K562 (cell line): ENCODE measurements at regions of chrX and their contacts with region 1.

Region 1: GRCh38 chrX:136162831-136163570 is 15.7 kb downstream of the FHL1 start:
- DNase-seq: peak; percentile 49 to 64 (median 55)
- ATAC-seq: peak; percentile 99
- H3K4me3 ChIP-seq: no peak overlapping the region
- H3K27ac ChIP-seq: no peak overlapping the region
- H3K4me1 ChIP-seq: no peaks in the 10 kb centered on the region
- H3K27me3 ChIP-seq: peaks cover 3 to 14% of the 10 kb centered on the region in 2 experiments; a peak in 3 of 5 replicates
- CTCF ChIP-seq: peak; percentile 73 to 90 (median 85)
- EP300 ChIP-seq: no peak
- POLR2A ChIP-seq: no peak
- RAD21 ChIP-seq: peak; percentile 69 to 85

Region 2: DNA sequence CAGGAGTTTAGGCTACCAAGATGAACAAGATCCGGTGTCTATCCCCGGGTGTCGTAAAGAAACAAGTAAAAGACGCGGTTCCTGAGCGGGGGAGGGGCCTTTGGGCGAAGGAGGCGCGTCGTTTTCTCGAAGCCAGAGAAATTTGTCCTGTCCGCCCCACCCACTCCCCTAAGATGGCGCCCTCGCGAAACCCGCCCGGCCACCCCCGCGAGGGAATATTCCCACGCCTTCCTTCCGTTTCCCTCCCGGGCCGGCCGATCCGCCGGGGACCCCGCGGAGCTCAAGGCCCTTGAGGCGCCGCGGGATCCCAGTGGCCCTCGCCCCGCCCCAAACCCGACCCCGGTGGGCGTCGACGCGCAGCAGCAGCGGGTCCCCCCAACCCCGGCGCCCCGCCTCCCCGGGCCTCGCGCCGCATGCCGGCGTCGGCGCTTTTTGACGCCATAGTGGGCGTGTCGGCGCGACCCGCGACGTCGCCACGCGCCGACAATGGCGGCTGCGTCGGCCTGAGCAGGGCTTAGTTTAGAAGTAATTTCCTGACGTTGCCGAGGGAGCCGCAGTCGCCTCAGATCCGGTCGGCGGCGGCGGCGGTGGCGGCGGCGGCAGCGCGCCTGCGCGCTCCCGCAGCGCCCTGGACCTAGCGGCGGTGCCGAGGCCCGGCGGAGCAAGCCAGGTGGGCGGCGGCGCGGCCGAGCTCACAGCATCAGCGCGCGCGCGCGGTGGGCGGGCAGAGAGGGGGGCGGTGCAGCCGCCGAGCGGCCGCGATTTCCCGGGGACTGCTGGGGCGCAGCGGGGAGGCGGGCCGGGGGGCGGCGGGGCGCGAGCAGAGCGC is 334.0 kb after region 1 on chrX and contains the start of gene HTATSF1:
- CTCF ChIA-PET with region 1: no interaction called
- POLR2A ChIA-PET with region 1: no interaction called
- in situ Hi-C with region 1: no loop called
- intact Hi-C with region 1: loop called (anchors 10 kb)
- DNase-seq: peak; percentile 81 to 91 (median 81)
- ATAC-seq: peak; percentile 90
- H3K4me3 ChIP-seq: peak within 1 kb of the TSS; percentile 83
- H3K27ac ChIP-seq: peak within 1 kb of the TSS; percentile 92
- H3K4me1 ChIP-seq: no peaks in the 10 kb centered on the region
- H3K27me3 ChIP-seq: peaks cover 3 to 5% of the 10 kb centered on the region in 2 experiments; a peak in 3 of 5 replicates
- CTCF ChIP-seq: no peak
- EP300 ChIP-seq: no peak
- POLR2A ChIP-seq: peak; percentile 80
- RAD21 ChIP-seq: no peak
- polyA plus RNA-seq, gene HTATSF1: 17.7 to 29.0 TPM

Region 3: GRCh38 chrX:136694431-136695087 is 531.6 kb after region 1 on chrX:
- CTCF ChIA-PET with region 1: no interaction called
- POLR2A ChIA-PET with region 1: no interaction called
- in situ Hi-C with region 1: no loop called
- intact Hi-C with region 1: loop called (anchors 10 kb)
- DNase-seq: peak; percentile 21 to 52 (median 37)
- ATAC-seq: peak; percentile 82
- H3K4me3 ChIP-seq: no peak overlapping the region
- H3K27ac ChIP-seq: no peak overlapping the region
- H3K4me1 ChIP-seq: no peaks in the 10 kb centered on the region; a peak in 1 of 5 replicates
- H3K27me3 ChIP-seq: no peaks in the 10 kb centered on the region
- CTCF ChIP-seq: peak; percentile 58 to 75 (median 66)
- EP300 ChIP-seq: no peak
- POLR2A ChIP-seq: no peak
- RAD21 ChIP-seq: peak; percentile 66 to 81